Panc1 (cell line): ENCODE measurements at regions of chr7 and their contacts with region 1.

Region 1: GRCh38 chr7:112550468-112551060 is 69.8 kb downstream of the LSMEM1 start:
- DNase-seq: peak; percentile 72
- ATAC-seq: peak; percentile 85
- H3K4me3 ChIP-seq: no peak overlapping the region
- H3K27ac ChIP-seq: no peak overlapping the region
- H3K4me1 ChIP-seq: no peaks in the 10 kb centered on the region
- H3K27me3 ChIP-seq: no peaks in the 10 kb centered on the region
- CTCF ChIP-seq: peak; percentile 88

Region 2: GRCh38 chr7:112437043-112437442 is 113.5 kb before region 1 on chr7:
- CTCF ChIA-PET with region 1: no interaction called
- POLR2A ChIA-PET with region 1: no interaction called
- in situ Hi-C with region 1: no loop called
- intact Hi-C with region 1: no loop called
- DNase-seq: no peak
- ATAC-seq: no peak
- H3K4me3 ChIP-seq: no peak overlapping the region
- H3K27ac ChIP-seq: no peak overlapping the region
- H3K4me1 ChIP-seq: no peaks in the 10 kb centered on the region
- H3K27me3 ChIP-seq: no peaks in the 10 kb centered on the region
- CTCF ChIP-seq: no peak

Region 3: DNA sequence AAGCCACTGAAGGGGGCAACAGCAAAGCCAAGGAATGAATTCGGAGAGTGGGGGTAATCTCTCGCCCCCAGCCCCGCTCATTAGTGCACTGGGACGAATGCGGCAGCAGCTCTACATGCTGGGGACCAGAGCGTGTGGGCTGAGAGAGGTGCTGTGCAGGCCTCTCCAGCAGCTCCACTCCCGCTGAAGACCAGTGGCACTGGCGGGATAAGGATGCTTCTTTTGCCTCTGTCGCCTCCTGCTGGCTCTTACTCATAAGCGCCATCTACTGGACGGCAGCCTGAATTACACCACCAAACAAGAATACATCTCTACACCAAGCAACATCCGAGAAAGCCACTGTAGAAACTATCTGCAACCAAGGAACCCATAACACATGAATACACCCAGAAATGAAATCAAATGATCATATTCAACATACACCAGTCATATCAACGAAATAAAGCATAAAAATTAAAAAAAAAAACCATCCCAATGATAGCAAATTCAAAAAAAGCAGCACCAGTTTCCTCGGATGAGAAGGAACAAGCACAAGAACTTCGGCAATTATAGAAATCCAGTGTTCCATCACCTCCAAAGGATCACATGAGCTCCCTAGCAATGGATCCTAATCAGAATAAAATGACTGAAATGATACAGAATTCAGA is 318.7 kb after region 1 on chr7:
- CTCF ChIA-PET with region 1: no interaction called
- POLR2A ChIA-PET with region 1: no interaction called
- in situ Hi-C with region 1: no loop called
- intact Hi-C with region 1: loop called (anchors 2 kb)
- DNase-seq: peak; percentile 39
- ATAC-seq: peak; percentile 72
- H3K4me3 ChIP-seq: no peak overlapping the region
- H3K27ac ChIP-seq: no peak overlapping the region
- H3K4me1 ChIP-seq: no peaks in the 10 kb centered on the region
- H3K27me3 ChIP-seq: no peaks in the 10 kb centered on the region
- CTCF ChIP-seq: peak; percentile 90

Region 4: GRCh38 chr7:112898432-112899290 is 348.1 kb after region 1 on chr7:
- CTCF ChIA-PET with region 1: no interaction called
- POLR2A ChIA-PET with region 1: no interaction called
- in situ Hi-C with region 1: no loop called
- intact Hi-C with region 1: loop called (anchors 5 kb)
- DNase-seq: peak; percentile 59
- ATAC-seq: peak; percentile 92
- H3K4me3 ChIP-seq: no peak overlapping the region
- H3K27ac ChIP-seq: no peak overlapping the region
- H3K4me1 ChIP-seq: no peaks in the 10 kb centered on the region
- H3K27me3 ChIP-seq: no peaks in the 10 kb centered on the region
- CTCF ChIP-seq: peak; percentile 86